HCT116 (cell line): ENCODE measurements at regions of chr16 and their contacts with region 1.

Region 1: GRCh38 chr16:46853713-46854443 is 22.9 kb upstream of the C16orf87 start:
- DNase-seq: peak; percentile 50
- ATAC-seq: peak; percentile 84
- H3K4me3 ChIP-seq: no peak overlapping the region
- H3K27ac ChIP-seq: no peak overlapping the region
- H3K4me1 ChIP-seq: peaks cover 1 to 11% of the 10 kb centered on the region in 2 experiments; a peak in 3 of 4 replicates
- H3K27me3 ChIP-seq: no peaks in the 10 kb centered on the region
- CTCF ChIP-seq: peak; percentile 80 to 81 (median 81)
- POLR2A ChIP-seq: no peak
- RAD21 ChIP-seq: peak; percentile 94

Region 2: DNA sequence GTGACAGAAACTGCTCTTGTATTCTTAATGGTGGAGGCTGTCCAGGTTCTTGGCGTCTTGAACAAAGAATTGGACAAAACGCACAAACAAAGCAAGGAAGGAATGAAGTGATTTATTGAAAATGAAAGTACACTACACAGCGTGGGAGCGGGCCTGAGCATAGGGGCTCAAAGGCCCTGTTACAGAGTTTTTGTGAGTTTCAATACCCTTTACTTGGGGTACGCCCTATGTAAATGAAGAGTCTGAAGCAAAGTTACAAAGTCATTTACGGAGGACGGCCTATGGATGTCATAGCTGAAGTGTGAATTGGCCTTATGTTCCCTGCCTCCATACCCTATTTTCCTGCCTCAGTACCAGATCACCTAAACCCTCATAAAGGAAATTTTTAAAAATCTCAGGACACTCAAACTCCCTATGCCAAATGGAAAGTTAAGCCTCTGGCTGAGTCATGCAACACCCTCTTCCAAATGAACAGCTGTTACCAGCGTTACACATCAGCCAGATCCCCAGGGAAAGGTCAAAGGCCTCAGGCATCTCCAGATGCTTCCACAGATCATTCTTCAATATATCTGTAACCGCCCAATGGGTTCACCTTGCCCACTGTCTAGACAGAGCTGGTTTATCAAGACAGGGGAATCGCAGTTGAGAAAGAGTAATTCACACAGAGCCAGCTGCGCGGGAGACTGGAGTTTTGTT is 203.8 kb before region 1 on chr16:
- CTCF ChIA-PET with region 1: no interaction called
- POLR2A ChIA-PET with region 1: no interaction called
- RAD21 ChIA-PET with region 1: no interaction called
- intact Hi-C with region 1: no loop called
- DNase-seq: no peak
- ATAC-seq: no peak
- H3K4me3 ChIP-seq: no peak overlapping the region
- H3K27ac ChIP-seq: no peak overlapping the region
- H3K4me1 ChIP-seq: no peaks in the 10 kb centered on the region
- H3K27me3 ChIP-seq: no peaks in the 10 kb centered on the region
- CTCF ChIP-seq: no peak
- POLR2A ChIP-seq: no peak
- RAD21 ChIP-seq: no peak

Region 3: GRCh38 chr16:46908540-46909372 is 54.9 kb after region 1 on chr16:
- CTCF ChIA-PET with region 1: interaction called, 62 read pairs
- POLR2A ChIA-PET with region 1: no interaction called
- RAD21 ChIA-PET with region 1: interaction called, 10 to 11 read pairs
- intact Hi-C with region 1: loop called (anchors 1 kb)
- DNase-seq: peak; percentile 57
- ATAC-seq: peak; percentile 81
- H3K4me3 ChIP-seq: no peak overlapping the region
- H3K27ac ChIP-seq: no peak overlapping the region
- H3K4me1 ChIP-seq: no peaks in the 10 kb centered on the region
- H3K27me3 ChIP-seq: no peaks in the 10 kb centered on the region
- CTCF ChIP-seq: peak; percentile 52 to 68 (median 59); a peak in 5 of 6 replicates
- POLR2A ChIP-seq: no peak
- RAD21 ChIP-seq: peak; percentile 69

Region 4: GRCh38 chr16:46918861-46919792 is 65.2 kb after region 1 on chr16:
- CTCF ChIA-PET with region 1: interaction called, 10 read pairs
- POLR2A ChIA-PET with region 1: no interaction called
- RAD21 ChIA-PET with region 1: no interaction called
- intact Hi-C with region 1: no loop called
- DNase-seq: no peak
- ATAC-seq: no peak
- H3K4me3 ChIP-seq: no peak overlapping the region
- H3K27ac ChIP-seq: no peak overlapping the region; the same call in 1 of the 2 replicates
- H3K4me1 ChIP-seq: peaks cover 19 to 31% of the 10 kb centered on the region in 2 experiments
- H3K27me3 ChIP-seq: no peaks in the 10 kb centered on the region
- CTCF ChIP-seq: no peak
- POLR2A ChIP-seq: no peak
- RAD21 ChIP-seq: no peak

Region 5: GRCh38 chr16:46929378-46930332 is 75.8 kb after region 1 on chr16:
- CTCF ChIA-PET with region 1: interaction called, 34 read pairs
- POLR2A ChIA-PET with region 1: no interaction called
- RAD21 ChIA-PET with region 1: interaction called, 6 to 9 read pairs
- intact Hi-C with region 1: loop called (anchors 1 kb)
- DNase-seq: peak; percentile 18
- ATAC-seq: peak; percentile 96
- H3K4me3 ChIP-seq: no peak overlapping the region
- H3K27ac ChIP-seq: no peak overlapping the region
- H3K4me1 ChIP-seq: no peaks in the 10 kb centered on the region
- H3K27me3 ChIP-seq: no peaks in the 10 kb centered on the region
- CTCF ChIP-seq: peak; percentile 55 to 95 (median 93)
- POLR2A ChIP-seq: no peak
- RAD21 ChIP-seq: peak; percentile 70

Region 6: DNA sequence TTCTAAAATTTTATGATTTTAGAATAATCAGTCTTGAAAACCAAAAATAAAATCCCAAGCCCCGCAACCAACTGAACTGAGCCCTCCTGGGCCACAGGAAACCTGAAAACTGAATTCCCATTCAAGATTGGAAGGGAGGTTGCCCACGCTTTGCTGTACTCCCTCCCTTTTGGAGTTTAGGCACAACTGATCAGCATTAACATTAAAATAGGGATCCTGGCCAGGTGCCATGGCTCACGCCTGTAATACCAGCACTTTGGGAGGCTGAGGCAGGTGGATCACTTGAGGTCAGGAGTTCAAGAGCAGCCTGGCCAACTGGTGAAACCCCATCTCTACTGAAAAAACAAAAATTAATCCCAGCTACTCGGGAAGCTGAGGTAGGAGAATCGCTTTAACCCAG is 342.6 kb after region 1 on chr16:
- CTCF ChIA-PET with region 1: no interaction called
- POLR2A ChIA-PET with region 1: no interaction called
- RAD21 ChIA-PET with region 1: no interaction called
- intact Hi-C with region 1: no loop called
- DNase-seq: no peak
- ATAC-seq: no peak
- H3K4me3 ChIP-seq: no peak overlapping the region
- H3K27ac ChIP-seq: no peak overlapping the region
- H3K4me1 ChIP-seq: no peaks in the 10 kb centered on the region
- H3K27me3 ChIP-seq: no peaks in the 10 kb centered on the region
- CTCF ChIP-seq: no peak
- POLR2A ChIP-seq: no peak
- RAD21 ChIP-seq: no peak